Colonic mucosa (tissue), 4 donors: ENCODE measurements at regions of chr1 and their contacts with region 1.

Region 1: GRCh38 chr1:39189592-39190041 is 14.9 kb upstream of the MACF1 start:
- DNase-seq: no peak
- H3K4me3 ChIP-seq: no peak overlapping the region
- H3K27ac ChIP-seq: no peak overlapping the region
- H3K4me1 ChIP-seq: no peaks in the 10 kb centered on the region
- H3K27me3 ChIP-seq: no peaks in the 10 kb centered on the region
- CTCF ChIP-seq: no peak

Region 2: GRCh38 chr1:38908821-38909220 is 280.8 kb before region 1 on chr1:
- intact Hi-C with region 1: no loop called
- DNase-seq: no peak
- H3K4me3 ChIP-seq: no peak overlapping the region
- H3K27ac ChIP-seq: no peak overlapping the region
- H3K4me1 ChIP-seq: no peaks in the 10 kb centered on the region
- H3K27me3 ChIP-seq: no peaks in the 10 kb centered on the region
- CTCF ChIP-seq: no peak

Region 3: DNA sequence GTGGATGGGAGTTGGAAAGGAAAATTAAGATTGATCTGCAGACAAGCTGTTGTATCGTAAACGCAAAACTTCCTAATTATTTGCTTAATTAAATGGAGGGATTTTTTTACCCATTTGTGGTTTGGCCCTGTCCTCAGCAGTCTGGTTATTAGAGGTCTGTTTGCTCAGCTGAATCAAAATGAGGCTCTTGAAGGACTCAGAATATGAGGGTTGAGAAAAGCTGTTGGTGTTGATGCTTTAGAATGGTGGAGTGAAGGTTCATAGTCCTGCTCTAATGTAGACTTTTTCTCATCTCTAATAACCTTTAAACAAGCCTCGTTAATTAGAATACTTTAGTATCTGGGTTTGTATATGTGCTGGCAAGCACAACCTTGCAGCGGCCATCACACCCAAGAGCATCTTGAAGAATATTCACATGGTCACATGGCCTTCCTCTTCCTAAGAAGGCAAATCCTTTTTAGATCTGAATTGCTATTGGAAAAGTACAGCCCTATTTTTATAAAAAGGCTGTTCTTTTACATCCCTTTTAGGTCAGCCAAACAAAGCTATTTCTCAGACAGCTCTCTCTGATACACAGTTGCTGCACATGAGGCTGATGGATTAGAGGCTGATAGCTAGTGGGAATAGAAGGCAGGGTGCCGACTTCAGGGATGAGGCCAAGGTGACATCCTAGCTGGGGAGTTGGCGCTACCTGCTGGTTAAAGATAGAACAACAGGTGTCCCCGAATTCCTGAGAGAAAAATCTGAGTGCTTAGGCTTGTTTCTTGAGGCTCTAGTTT is 68.7 kb after region 1 on chr1:
- intact Hi-C with region 1: loop called (anchors 5 kb)
- DNase-seq: peak; percentile 77
- H3K4me3 ChIP-seq: no peak overlapping the region
- H3K27ac ChIP-seq: no peak overlapping the region
- H3K4me1 ChIP-seq: no peaks in the 10 kb centered on the region
- H3K27me3 ChIP-seq: no peaks in the 10 kb centered on the region
- CTCF ChIP-seq: peak; percentile 81